GM12878 (cell line): ENCODE measurements at regions of chr1 and their contacts with region 1.

Region 1: DNA sequence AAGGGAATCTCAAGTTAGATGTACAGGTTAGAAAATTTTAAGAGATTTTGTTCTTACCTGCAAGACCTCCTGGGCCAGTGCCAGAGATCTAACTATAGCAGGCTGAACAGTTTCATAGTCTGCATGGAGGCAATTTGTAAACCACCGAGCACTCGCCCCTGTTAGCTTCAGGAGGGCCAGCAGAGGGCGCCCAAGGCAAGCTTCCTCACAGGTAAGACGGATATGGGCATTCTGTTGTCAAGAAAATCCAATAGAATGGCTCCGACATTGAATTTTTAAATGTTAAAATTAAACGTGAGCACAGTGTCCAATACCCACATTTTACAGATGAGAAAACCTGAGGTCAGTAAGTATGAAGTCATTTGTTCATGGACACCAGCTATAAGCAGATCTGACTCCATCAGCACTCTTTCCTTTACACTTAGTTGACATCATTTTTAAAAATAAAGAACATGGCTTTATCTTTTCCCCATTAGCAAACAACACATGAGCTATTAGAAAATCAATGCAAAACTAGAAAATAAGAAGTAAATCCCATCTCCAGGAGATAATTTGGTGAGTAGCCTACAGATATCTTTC is 2.2 kb downstream of the REG4 start:
- DNase-seq: peak; percentile 11
- ATAC-seq: peak; percentile 94
- H3K4me3 ChIP-seq: no peak overlapping the region
- H3K27ac ChIP-seq: no peak overlapping the region
- H3K4me1 ChIP-seq: no peaks in the 10 kb centered on the region
- H3K27me3 ChIP-seq: no peaks in the 10 kb centered on the region
- CTCF ChIP-seq: peak; percentile 84 to 93 (median 92)
- EP300 ChIP-seq: no peak
- POLR2A ChIP-seq: no peak
- RAD21 ChIP-seq: peak; percentile 58

Region 2: GRCh38 chr1:119549719-119550132 is 259.3 kb before region 1 on chr1:
- CTCF ChIA-PET with region 1: no interaction called
- POLR2A ChIA-PET with region 1: no interaction called
- RAD21 ChIA-PET with region 1: no interaction called
- SMC1A ChIA-PET with region 1: no interaction called
- in situ Hi-C with region 1: no loop called
- intact Hi-C with region 1: no loop called
- DNase-seq: no peak
- ATAC-seq: peak; percentile 96
- H3K4me3 ChIP-seq: no peak overlapping the region
- H3K27ac ChIP-seq: no peak overlapping the region
- H3K4me1 ChIP-seq: no peaks in the 10 kb centered on the region
- H3K27me3 ChIP-seq: no peaks in the 10 kb centered on the region; a peak in 2 of 4 replicates
- CTCF ChIP-seq: peak; percentile 48 to 70 (median 61)
- EP300 ChIP-seq: no peak
- POLR2A ChIP-seq: no peak
- RAD21 ChIP-seq: peak; percentile 69

Region 3: DNA sequence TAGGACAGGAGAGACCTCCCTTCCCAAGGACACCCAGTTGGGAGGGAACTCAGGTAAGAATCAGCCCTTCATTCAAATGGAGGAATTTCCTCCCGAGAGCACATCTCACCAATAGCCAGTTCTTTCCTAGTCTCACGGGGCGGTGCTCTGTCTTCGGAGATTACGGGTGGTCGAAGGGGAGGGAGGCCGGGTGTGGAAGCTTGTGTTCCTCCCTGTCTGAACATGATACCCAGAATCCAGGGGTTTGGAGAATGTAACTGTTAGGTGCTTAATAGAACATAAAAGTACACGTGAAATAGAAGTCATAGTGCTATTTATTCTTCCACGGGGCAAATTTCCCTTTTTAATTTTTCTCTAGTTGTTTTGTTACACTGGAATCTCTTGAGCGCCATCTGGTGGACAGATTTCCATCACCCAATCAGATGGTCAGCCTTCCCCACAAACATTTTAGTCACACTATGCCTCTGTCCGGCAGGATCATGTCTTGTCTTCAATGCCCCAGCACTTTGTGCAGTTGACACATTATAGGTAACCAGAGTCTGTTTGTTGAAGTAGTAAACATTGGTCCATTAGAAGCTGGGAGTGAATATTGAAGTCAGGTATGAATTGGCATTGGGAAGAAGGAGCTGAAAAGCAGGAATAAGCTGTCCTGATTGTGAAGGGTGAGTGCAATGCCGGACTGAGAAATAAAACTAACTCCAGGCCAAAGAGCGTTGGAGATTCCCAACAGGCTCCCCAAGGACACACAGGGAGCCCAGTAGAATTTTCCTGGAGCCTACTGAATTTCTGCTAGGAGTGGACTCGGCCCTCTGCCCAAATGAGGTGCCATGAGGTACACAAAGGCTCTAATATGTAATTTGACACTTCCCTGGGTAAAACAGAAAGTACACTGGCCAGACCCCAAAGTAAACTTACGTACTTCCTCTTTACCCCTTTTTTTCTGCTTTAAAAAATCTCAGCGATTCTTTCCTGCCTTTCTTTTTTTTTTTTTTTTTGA is 133.4 kb before region 1 on chr1:
- CTCF ChIA-PET with region 1: no interaction called
- POLR2A ChIA-PET with region 1: no interaction called
- RAD21 ChIA-PET with region 1: no interaction called
- SMC1A ChIA-PET with region 1: no interaction called
- in situ Hi-C with region 1: no loop called
- intact Hi-C with region 1: no loop called
- DNase-seq: peak; percentile 42
- ATAC-seq: peak; percentile 94
- H3K4me3 ChIP-seq: no peak overlapping the region; the same call in 1 of the 2 replicates
- H3K27ac ChIP-seq: no peak overlapping the region
- H3K4me1 ChIP-seq: no peaks in the 10 kb centered on the region
- H3K27me3 ChIP-seq: no peaks in the 10 kb centered on the region; a peak in 1 of 4 replicates
- CTCF ChIP-seq: peak; percentile 63 to 80 (median 78)
- EP300 ChIP-seq: no peak
- POLR2A ChIP-seq: no peak
- RAD21 ChIP-seq: peak; percentile 76

Region 4: DNA sequence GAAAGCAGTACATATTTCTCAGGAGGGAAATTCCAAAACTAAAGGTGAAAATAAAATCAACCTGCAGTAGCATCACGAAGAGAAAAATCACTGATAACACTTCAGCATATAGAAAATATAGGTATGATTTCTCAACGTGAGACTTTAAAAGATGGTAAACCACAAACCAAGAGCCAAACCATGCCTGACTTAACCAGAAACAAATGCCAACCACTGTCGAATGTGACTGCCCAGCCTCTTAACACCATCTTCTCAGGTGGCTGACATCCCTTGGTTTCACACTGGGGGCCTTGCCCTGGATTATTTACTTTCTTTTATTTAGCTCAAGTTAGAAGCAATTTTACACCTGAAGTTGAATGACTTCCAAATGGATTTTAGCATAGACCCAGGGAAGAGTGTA is 50.5 kb before region 1 on chr1:
- CTCF ChIA-PET with region 1: no interaction called
- POLR2A ChIA-PET with region 1: no interaction called
- RAD21 ChIA-PET with region 1: no interaction called
- SMC1A ChIA-PET with region 1: no interaction called
- in situ Hi-C with region 1: no loop called
- intact Hi-C with region 1: no loop called
- DNase-seq: no peak
- ATAC-seq: no peak
- H3K4me3 ChIP-seq: no peak overlapping the region
- H3K27ac ChIP-seq: no peak overlapping the region
- H3K4me1 ChIP-seq: no peaks in the 10 kb centered on the region
- H3K27me3 ChIP-seq: peaks cover 0 to 3% of the 10 kb centered on the region in 2 experiments; a peak in 1 of 4 replicates
- CTCF ChIP-seq: no peak
- EP300 ChIP-seq: no peak
- POLR2A ChIP-seq: no peak
- RAD21 ChIP-seq: no peak

Region 5: GRCh38 chr1:119773711-119774241 is 35.3 kb before region 1 on chr1:
- CTCF ChIA-PET with region 1: interaction called, 3 read pairs
- POLR2A ChIA-PET with region 1: no interaction called
- RAD21 ChIA-PET with region 1: no interaction called
- SMC1A ChIA-PET with region 1: no interaction called
- in situ Hi-C with region 1: loop called (anchors 5 kb)
- intact Hi-C with region 1: no loop called
- DNase-seq: no peak
- ATAC-seq: no peak
- H3K4me3 ChIP-seq: no peak overlapping the region
- H3K27ac ChIP-seq: no peak overlapping the region
- H3K4me1 ChIP-seq: no peaks in the 10 kb centered on the region
- H3K27me3 ChIP-seq: peaks cover 0 to 10% of the 10 kb centered on the region in 2 experiments; a peak in 2 of 4 replicates
- CTCF ChIP-seq: no peak
- EP300 ChIP-seq: no peak
- POLR2A ChIP-seq: no peak
- RAD21 ChIP-seq: no peak

Region 6: DNA sequence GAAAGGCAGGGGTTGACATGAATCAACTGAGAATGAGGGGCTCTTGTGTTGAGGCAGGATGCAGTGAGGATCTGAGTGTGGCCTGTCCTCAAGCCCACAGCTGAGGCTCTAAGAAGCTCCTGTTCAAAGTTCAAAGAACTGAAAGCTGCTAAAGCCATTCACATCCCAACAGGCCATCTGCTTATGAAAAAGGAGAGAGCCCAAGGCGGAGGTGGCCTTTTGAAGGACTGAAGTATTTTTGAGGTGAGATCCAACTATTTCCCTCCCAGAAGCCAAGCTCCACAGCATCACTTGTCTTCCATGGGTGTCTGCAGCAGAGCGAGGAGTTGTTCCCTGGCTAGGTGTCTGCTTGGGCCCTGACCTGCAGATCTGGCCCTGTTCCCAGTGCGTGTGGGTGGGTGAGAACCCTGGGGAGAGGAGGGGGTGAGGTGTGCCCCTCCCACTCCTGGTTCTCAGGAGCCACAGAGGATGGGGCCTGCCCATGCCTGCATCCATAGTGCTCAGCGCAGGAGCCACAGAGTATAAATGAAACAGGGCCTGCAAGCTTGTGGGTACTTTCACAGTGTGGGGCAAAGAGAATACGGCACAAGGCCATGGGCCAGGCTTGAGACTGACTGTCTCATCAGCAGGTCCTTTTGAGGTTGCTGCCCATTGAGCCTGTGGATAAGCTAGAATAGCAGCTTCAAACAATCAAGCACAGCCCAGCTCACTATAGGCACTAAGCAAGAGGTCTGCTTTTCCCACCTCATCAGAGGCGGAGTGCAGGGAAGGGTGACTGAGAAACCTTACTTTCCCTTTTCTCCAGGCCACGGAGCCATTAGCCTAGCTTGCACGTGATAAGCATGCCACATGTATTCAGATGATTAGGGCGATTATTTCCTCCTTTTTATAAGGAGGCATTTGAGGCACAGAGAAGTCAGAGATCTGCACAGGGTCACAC is 13.5 kb before region 1 on chr1:
- CTCF ChIA-PET with region 1: interaction called, 17 read pairs
- POLR2A ChIA-PET with region 1: no interaction called
- RAD21 ChIA-PET with region 1: no interaction called
- SMC1A ChIA-PET with region 1: no interaction called
- in situ Hi-C with region 1: no loop called
- intact Hi-C with region 1: no loop called
- DNase-seq: no peak
- ATAC-seq: no peak
- H3K4me3 ChIP-seq: no peak overlapping the region
- H3K27ac ChIP-seq: no peak overlapping the region
- H3K4me1 ChIP-seq: no peaks in the 10 kb centered on the region
- H3K27me3 ChIP-seq: peaks cover 0 to 3% of the 10 kb centered on the region in 2 experiments; a peak in 2 of 4 replicates
- CTCF ChIP-seq: no peak
- EP300 ChIP-seq: no peak
- POLR2A ChIP-seq: no peak
- RAD21 ChIP-seq: no peak

Region 7: DNA sequence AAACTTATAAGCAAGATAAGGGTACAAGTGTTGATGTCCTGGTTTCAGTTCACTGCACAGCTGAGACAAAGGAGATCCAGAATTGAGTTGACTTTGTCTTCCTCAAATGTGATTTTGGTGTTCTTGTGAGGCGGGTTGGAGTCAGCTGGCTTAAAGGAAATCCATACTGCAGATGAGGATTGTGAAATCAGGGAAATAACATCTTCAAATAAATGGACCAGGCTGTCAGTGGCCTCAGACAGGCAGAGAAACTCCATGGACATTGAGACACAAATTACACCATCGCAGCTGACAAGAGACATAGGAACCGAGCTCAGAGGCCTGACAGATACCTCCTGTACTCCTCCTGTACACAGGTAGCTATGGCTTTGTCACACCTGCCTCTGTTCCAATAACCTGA is 29.2 kb after region 1 on chr1:
- CTCF ChIA-PET with region 1: no interaction called
- POLR2A ChIA-PET with region 1: no interaction called
- RAD21 ChIA-PET with region 1: no interaction called
- SMC1A ChIA-PET with region 1: no interaction called
- in situ Hi-C with region 1: no loop called
- intact Hi-C with region 1: no loop called
- DNase-seq: no peak
- ATAC-seq: no peak
- H3K4me3 ChIP-seq: no peak overlapping the region
- H3K27ac ChIP-seq: no peak overlapping the region
- H3K4me1 ChIP-seq: no peaks in the 10 kb centered on the region
- H3K27me3 ChIP-seq: no peaks in the 10 kb centered on the region; a peak in 1 of 4 replicates
- CTCF ChIP-seq: no peak
- EP300 ChIP-seq: no peak
- POLR2A ChIP-seq: no peak
- RAD21 ChIP-seq: no peak